GM12878 (cell line): ENCODE measurements at regions of chr5 and their contacts with region 1.

Region 1: GRCh38 chr5:143700994-143701393 is 111.0 kb upstream of the HMHB1 start:
- DNase-seq: no peak
- ATAC-seq: no peak
- H3K4me3 ChIP-seq: no peak overlapping the region
- H3K27ac ChIP-seq: no peak overlapping the region
- H3K4me1 ChIP-seq: no peaks in the 10 kb centered on the region
- H3K27me3 ChIP-seq: no peaks in the 10 kb centered on the region
- CTCF ChIP-seq: no peak
- EP300 ChIP-seq: no peak
- POLR2A ChIP-seq: no peak
- RAD21 ChIP-seq: no peak

Region 2: DNA sequence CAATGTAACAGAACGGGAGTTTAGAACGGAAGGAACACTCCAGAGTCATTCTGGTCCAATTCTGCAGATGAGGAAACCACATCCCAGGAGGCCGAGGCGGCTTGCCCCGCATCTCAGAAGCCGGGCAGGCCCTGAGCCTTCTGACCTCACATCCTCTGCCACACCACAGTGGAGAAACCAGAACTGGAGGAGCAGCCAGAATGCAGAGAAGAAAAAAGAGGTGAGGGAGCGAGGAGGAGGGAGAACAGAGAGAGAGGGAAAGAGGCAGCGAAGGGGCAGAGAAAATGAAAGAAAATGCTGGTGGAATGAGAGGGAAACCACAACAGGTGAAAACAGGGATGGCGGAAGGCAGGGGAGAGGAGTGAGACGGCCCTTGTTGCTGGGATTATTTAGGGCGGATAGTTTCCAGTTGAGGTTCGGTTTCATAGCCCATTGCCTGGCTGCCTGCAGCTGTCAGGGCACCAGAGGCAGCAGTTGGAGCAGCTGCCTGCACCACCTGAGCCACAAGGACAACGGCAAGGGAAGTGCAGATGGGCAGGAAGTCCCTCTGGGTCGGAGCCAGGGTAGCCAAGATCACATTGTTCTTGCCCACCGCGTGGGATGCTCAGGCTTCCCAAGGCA is 111.2 kb after region 1 on chr5 and contains the start of gene HMHB1:
- CTCF ChIA-PET with region 1: no interaction called
- POLR2A ChIA-PET with region 1: no interaction called
- RAD21 ChIA-PET with region 1: no interaction called
- SMC1A ChIA-PET with region 1: no interaction called
- in situ Hi-C with region 1: no loop called
- intact Hi-C with region 1: loop called (anchors 5 kb)
- DNase-seq: no peak
- ATAC-seq: peak; percentile 80
- H3K4me3 ChIP-seq: peak within 1 kb of the TSS; percentile 31
- H3K27ac ChIP-seq: peak within 1 kb of the TSS; percentile 49
- H3K4me1 ChIP-seq: peaks cover 7% of the 10 kb centered on the region; the same call in 1 of the 2 replicates
- H3K27me3 ChIP-seq: no peaks in the 10 kb centered on the region
- CTCF ChIP-seq: no peak
- EP300 ChIP-seq: no peak
- POLR2A ChIP-seq: no peak
- RAD21 ChIP-seq: no peak
- polyA plus RNA-seq, gene HMHB1: 16.0 to 20.3 TPM